Activated CD8-positive, alpha-beta T cell treated with anti-CD3 and anti-CD28 coated beads for 36 hours (primary cell): ENCODE measurements at regions of chr3 and their contacts with region 1.

Region 1: GRCh38 chr3:87260270-87260669 is 16.1 kb downstream of the POU1F1 start:
- DNase-seq: peak; percentile 69
- ATAC-seq: peak; percentile 55
- H3K4me3 Mint-ChIP-seq: no peak overlapping the region
- H3K27ac Mint-ChIP-seq: no peak overlapping the region
- H3K4me1 Mint-ChIP-seq: peaks cover 3% of the 10 kb centered on the region
- H3K27me3 Mint-ChIP-seq: no peaks in the 10 kb centered on the region
- CTCF ChIP-seq: peak; percentile 75

Region 2: GRCh38 chr3:86895202-86895601 is 365.1 kb before region 1 on chr3:
- CTCF ChIA-PET with region 1: no interaction called
- POLR2A ChIA-PET with region 1: no interaction called
- intact Hi-C with region 1: no loop called
- DNase-seq: no peak
- ATAC-seq: no peak
- H3K4me3 Mint-ChIP-seq: no peak overlapping the region
- H3K27ac Mint-ChIP-seq: no peak overlapping the region
- H3K4me1 Mint-ChIP-seq: no peaks in the 10 kb centered on the region
- H3K27me3 Mint-ChIP-seq: no peaks in the 10 kb centered on the region
- CTCF ChIP-seq: no peak

Region 3: GRCh38 chr3:87247430-87247773 is 12.9 kb before region 1 on chr3:
- CTCF ChIA-PET with region 1: interaction called, 25 read pairs
- POLR2A ChIA-PET with region 1: no interaction called
- intact Hi-C with region 1: no loop called
- DNase-seq: no peak
- ATAC-seq: no peak
- H3K4me3 Mint-ChIP-seq: no peak overlapping the region
- H3K27ac Mint-ChIP-seq: no peak overlapping the region
- H3K4me1 Mint-ChIP-seq: peaks cover 15% of the 10 kb centered on the region
- H3K27me3 Mint-ChIP-seq: no peaks in the 10 kb centered on the region
- CTCF ChIP-seq: no peak

Region 4: GRCh38 chr3:87272718-87273341 is 12.6 kb after region 1 on chr3:
- CTCF ChIA-PET with region 1: interaction called, 30 read pairs
- POLR2A ChIA-PET with region 1: no interaction called
- intact Hi-C with region 1: no loop called
- DNase-seq: no peak
- ATAC-seq: peak; percentile 40
- H3K4me3 Mint-ChIP-seq: no peak overlapping the region
- H3K27ac Mint-ChIP-seq: no peak overlapping the region
- H3K4me1 Mint-ChIP-seq: peaks cover 29% of the 10 kb centered on the region
- H3K27me3 Mint-ChIP-seq: peaks cover 3% of the 10 kb centered on the region
- CTCF ChIP-seq: no peak

Region 5: DNA sequence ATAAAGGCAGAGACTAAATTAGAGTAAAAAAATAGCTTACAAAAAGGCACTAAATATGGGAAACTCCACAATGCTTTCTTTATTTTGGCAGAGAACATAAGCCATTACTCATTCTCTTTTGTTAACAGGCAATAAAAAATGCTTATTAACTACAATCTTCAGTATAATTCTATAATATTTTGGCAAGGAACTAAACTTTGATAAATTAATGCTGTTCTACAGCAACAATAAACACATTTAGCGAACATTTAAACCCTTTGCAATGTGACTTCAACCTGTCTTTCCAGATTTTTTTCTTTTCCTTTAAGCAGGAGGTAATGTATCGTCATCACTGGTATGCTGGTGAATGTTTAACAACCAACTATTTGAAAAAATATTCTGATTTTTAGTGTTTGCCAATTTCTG is 58.3 kb after region 1 on chr3:
- CTCF ChIA-PET with region 1: no interaction called
- POLR2A ChIA-PET with region 1: no interaction called
- intact Hi-C with region 1: loop called (anchors 10 kb)
- DNase-seq: no peak
- ATAC-seq: no peak
- H3K4me3 Mint-ChIP-seq: no peak overlapping the region
- H3K27ac Mint-ChIP-seq: no peak overlapping the region
- H3K4me1 Mint-ChIP-seq: no peaks in the 10 kb centered on the region
- H3K27me3 Mint-ChIP-seq: peaks cover 22% of the 10 kb centered on the region
- CTCF ChIP-seq: no peak